Calu3 (cell line): ENCODE measurements at regions of chr9 and their contacts with region 1.

Region 1: GRCh38 chr9:120936011-120936763 is 9.6 kb upstream of the TRAF1 start:
- DNase-seq: peak; percentile 89
- H3K4me3 Mint-ChIP-seq: no peak overlapping the region
- H3K27ac Mint-ChIP-seq: no peak overlapping the region
- H3K4me1 Mint-ChIP-seq: peaks cover 9% of the 10 kb centered on the region
- H3K27me3 Mint-ChIP-seq: peaks cover 21% of the 10 kb centered on the region
- CTCF ChIP-seq: peak; percentile 60

Region 2: GRCh38 chr9:120755827-120756434 is 180.3 kb before region 1 on chr9:
- CTCF ChIA-PET with region 1: interaction called, 6 read pairs
- intact Hi-C with region 1: loop called (anchors 1 kb)
- DNase-seq: peak; percentile 58
- H3K4me3 Mint-ChIP-seq: no peak overlapping the region
- H3K27ac Mint-ChIP-seq: no peak overlapping the region
- H3K4me1 Mint-ChIP-seq: no peaks in the 10 kb centered on the region
- H3K27me3 Mint-ChIP-seq: no peaks in the 10 kb centered on the region
- CTCF ChIP-seq: peak; percentile 68

Region 3: DNA sequence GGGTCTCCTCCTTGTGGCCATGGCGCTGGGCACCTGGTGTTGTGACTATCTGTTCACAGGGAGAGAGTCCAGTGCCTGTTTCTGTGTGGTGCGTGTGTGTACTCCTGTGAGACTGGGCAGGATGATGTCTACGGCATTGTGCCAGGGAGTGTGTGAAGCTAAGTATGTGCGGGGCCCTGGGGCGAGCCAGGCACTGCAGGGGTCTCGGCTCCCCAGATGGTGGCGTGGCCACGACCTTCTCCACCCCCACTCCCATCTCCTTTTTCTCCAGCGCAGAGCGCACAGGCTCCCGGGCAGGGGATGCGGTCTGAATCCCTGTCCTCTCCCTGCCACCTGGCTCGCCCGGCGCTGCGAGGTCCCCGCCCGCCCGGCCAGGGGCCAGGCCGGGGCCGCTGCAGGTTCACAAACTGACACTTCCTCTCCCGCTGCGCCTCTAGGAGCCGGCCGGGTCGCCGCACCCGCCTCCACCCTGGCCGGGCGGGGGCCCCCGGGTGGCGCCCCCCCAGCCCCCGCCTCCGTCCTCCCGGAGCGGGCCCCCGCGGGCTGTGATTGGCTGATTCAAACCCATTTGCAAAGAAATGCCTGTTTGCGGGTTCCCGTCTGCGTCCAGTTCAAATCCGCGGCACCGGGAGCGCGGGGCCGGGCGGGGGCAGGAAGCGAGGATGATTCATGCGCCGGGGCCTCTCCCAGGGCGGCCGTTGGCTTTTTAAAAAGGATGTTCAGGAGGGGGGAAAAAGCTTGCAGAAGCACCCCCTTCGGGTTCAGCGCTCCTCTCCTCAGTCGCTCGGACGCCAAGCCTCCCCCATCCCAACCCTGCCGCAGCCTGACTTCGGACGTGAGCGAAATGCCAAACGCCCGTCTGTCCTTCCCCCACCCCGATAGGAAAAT is 60.0 kb before region 1 on chr9:
- CTCF ChIA-PET with region 1: no interaction called
- intact Hi-C with region 1: loop called (anchors 5 kb)
- DNase-seq: peak; percentile 86
- H3K4me3 Mint-ChIP-seq: peak overlapping the region; percentile 76
- H3K27ac Mint-ChIP-seq: peak overlapping the region; percentile 85
- H3K4me1 Mint-ChIP-seq: peaks cover 55% of the 10 kb centered on the region
- H3K27me3 Mint-ChIP-seq: peaks cover 13% of the 10 kb centered on the region
- CTCF ChIP-seq: no peak

Region 4: DNA sequence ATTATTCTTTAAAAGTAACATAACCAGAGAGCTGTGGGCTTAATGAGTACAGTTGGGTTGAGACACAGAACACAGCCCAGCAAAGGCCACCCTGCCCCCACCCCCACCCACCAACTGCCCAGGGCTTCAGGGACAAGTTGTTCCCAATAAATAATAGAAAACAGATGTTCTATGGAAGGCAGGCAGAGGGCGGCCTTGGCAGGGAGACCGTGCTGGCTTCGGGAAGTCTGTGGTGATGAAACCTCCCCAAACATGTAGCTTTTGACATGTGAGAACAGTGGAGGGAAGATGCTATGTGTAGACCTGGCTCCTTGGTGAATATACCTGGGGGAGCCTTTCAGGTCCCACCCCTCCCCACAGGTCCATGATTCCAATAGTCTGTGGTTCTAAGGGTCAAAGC is 19.6 kb before region 1 on chr9:
- CTCF ChIA-PET with region 1: no interaction called
- intact Hi-C with region 1: no loop called
- DNase-seq: no peak
- H3K4me3 Mint-ChIP-seq: no peak overlapping the region
- H3K27ac Mint-ChIP-seq: no peak overlapping the region
- H3K4me1 Mint-ChIP-seq: no peaks in the 10 kb centered on the region
- H3K27me3 Mint-ChIP-seq: no peaks in the 10 kb centered on the region
- CTCF ChIP-seq: no peak